Colonic mucosa (tissue), 4 donors: ENCODE measurements at regions of chr7 and their contacts with region 1.

Region 1: DNA sequence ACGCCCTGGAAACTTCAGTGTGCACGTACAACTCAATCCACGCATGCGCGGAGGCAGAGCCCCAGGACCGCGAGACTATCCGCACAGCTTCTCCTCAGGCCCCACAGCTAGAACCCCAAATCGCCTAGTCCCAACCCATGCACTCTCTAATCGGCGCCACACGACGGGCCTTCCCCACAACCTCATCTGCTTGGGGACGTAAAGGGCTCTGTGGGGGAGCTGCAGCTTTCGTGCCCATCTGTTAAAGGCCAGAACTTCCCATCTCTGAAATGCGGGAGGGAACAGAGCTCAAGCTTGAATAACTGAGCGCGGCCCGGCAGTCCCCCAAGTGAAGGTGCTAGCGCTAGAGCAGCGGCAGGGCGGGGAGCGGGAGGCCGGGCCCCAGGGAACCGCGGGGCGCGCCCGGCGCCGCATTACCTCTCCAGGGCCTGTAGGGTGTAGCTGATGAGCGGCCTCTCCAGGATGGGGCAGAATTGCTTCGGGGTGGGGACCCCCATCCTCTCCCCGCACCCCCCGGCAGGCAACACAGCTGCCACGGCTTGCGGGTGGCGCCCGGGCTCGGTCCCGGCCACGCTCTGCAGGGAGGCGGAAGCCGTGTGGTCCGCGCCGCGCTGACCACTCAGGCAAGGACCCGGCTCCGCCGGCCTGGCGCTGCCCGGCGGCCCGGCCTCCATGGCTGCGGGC is 547 bp downstream of the CRPPA start:
- DNase-seq: peak; percentile 91
- H3K4me3 ChIP-seq: peak overlapping the region; percentile 51
- H3K27ac ChIP-seq: peak overlapping the region; percentile 98
- H3K4me1 ChIP-seq: peaks cover 5% of the 10 kb centered on the region
- H3K27me3 ChIP-seq: no peaks in the 10 kb centered on the region
- CTCF ChIP-seq: peak; percentile 19

Region 2: GRCh38 chr7:16083931-16084330 is 336.9 kb before region 1 on chr7:
- intact Hi-C with region 1: loop called (anchors 10 kb)
- DNase-seq: no peak
- H3K4me3 ChIP-seq: no peak overlapping the region
- H3K27ac ChIP-seq: no peak overlapping the region
- H3K4me1 ChIP-seq: no peaks in the 10 kb centered on the region
- H3K27me3 ChIP-seq: no peaks in the 10 kb centered on the region
- CTCF ChIP-seq: no peak